ENCODE measurements at regions of chr2 and their contacts with region 1.

Region 1: DNA sequence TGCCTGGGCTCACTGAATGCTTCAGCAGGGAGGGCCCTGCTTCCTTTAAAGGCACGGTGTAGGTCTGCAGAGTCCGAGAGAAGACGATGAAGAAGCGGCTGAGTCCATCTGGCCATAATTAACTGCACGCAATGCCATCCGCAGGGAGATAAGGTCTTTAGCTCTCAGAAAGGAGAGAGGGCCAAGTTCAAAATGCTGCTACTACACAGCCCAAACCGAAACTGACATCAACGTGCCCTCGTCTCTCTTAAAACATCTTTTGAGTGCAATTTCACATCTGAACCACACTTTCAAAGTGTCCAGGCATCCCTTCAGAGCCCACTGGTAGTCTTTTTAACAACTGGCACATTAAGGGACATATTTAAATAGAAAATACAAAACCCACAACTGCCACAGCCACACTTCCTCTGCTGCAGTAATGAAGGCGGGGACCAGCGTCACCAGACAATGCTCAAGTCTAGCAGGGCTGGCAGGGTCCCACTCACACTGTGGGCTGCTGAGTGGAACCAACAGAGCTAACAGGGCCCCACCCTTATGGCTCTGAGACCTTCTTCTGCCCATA is 35.8 kb downstream of the ST3GAL5 start:
- DNase-seq: peak; percentile 73 to 88 (median 74)
- H3K4me3 ChIP-seq: peak overlapping the region; percentile 34 to 48
- H3K4me3 Mint-ChIP-seq: peak overlapping the region; percentile 82 to 92 (median 86)
- H3K27ac ChIP-seq: peak overlapping the region; percentile 84
- H3K27ac Mint-ChIP-seq: peak overlapping the region; percentile 98 to 100 (median 100)
- H3K4me1 ChIP-seq: peaks cover 81% of the 10 kb centered on the region
- H3K4me1 Mint-ChIP-seq: peaks cover 67 to 87% (median 76%) of the 10 kb centered on the region in 4 donors
- H3K27me3 ChIP-seq: no peaks in the 10 kb centered on the region
- H3K27me3 Mint-ChIP-seq: no peaks in the 10 kb centered on the region

Region 2: DNA sequence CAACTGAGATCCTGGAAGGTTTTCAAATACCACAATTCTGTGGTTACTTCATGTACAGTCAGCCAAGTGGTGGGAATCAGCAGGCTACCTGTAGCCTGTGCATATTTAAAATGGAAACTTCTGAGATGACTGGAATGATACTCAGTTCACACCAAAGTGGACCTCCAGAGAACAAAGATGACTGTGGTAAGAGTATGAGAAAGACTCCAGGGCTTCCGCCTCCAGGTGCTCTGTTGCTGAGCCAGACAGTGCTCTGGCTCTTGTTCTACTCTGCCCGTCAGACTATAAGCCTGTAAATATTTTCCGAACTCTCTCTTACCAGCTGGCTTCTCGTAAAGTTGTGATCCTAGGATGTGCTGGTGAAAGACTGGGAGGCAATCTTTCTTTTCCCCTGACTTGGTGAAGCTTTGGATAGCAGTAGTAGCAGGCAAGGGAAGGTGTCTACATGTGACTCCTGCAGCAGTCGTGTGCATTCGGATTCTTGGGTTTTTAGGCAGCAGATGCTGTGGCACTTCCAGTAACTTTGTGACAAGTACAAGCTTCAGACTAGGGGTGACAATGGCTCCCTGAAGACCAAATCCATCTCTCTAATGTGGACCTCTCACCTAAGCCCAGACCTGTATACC is 12.6 kb after region 1 on chr2:
- CTCF ChIA-PET with region 1: interaction called, 15 read pairs
- POLR2A ChIA-PET with region 1: interaction called, 61 read pairs
- intact Hi-C with region 1: loop called (anchors 1 kb)
- DNase-seq: peak in 1 of 5 donors; percentile 44
- H3K4me3 ChIP-seq: no peak overlapping the region
- H3K4me3 Mint-ChIP-seq: peak overlapping the region in 7 of 8 donors; percentile 14 to 64 (median 48)
- H3K27ac ChIP-seq: peak overlapping the region; percentile 13
- H3K27ac Mint-ChIP-seq: peak overlapping the region; percentile 55 to 89 (median 79)
- H3K4me1 ChIP-seq: peaks cover 55% of the 10 kb centered on the region
- H3K4me1 Mint-ChIP-seq: peaks cover 46 to 85% (median 63%) of the 10 kb centered on the region in 4 donors
- H3K27me3 ChIP-seq: no peaks in the 10 kb centered on the region
- H3K27me3 Mint-ChIP-seq: no peaks in the 10 kb centered on the region

Region 3: GRCh38 chr2:85878719-85879385 is 25.8 kb after region 1 on chr2:
- CTCF ChIA-PET with region 1: interaction called, 4 read pairs
- POLR2A ChIA-PET with region 1: interaction called, 10 read pairs
- intact Hi-C with region 1: no loop called
- DNase-seq: no peak
- H3K4me3 ChIP-seq: no peak overlapping the region
- H3K4me3 Mint-ChIP-seq: peak overlapping the region; percentile 3 to 80 (median 52)
- H3K27ac ChIP-seq: no peak overlapping the region
- H3K27ac Mint-ChIP-seq: peak overlapping the region in 6 of 7 donors; percentile 37 to 92 (median 70)
- H3K4me1 ChIP-seq: peaks cover 24% of the 10 kb centered on the region
- H3K4me1 Mint-ChIP-seq: peaks cover 46 to 82% (median 66%) of the 10 kb centered on the region in 4 donors
- H3K27me3 ChIP-seq: no peaks in the 10 kb centered on the region
- H3K27me3 Mint-ChIP-seq: no peaks in the 10 kb centered on the region